ENCODE measurements at regions of chr3 and their contacts with region 1.

Region 1: DNA sequence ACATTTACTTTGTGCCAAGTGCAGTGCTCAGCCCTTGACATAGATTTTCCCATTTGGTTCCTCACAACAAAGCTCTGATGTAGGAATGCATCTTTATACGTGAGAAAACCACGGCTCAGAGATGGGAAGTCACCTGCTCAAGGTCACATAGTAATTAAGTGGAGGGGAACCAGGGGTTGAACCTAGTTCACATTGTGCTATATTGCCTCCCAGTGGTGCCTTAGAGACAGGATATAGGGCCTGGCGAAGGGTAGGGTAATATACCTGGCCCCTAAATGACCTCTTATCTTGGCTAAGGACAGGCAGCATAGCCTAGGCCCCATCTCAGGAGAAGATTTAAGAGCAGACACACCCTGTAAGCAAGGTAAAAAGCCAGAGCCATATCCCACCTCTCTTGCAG is 71.5 kb downstream of the FOXP1 start:
- DNase-seq: peak in 7 of 9 donors; percentile 60 to 76 (median 66)
- ATAC-seq: peak; percentile 96
- H3K4me3 ChIP-seq: no peak overlapping the region
- H3K4me3 Mint-ChIP-seq: peak overlapping the region in 7 of 10 donors; percentile 6 to 56 (median 44)
- H3K27ac ChIP-seq: peak overlapping the region; percentile 36
- H3K27ac Mint-ChIP-seq: peak overlapping the region in 5 of 9 donors; percentile 69 to 91 (median 83)
- H3K4me1 ChIP-seq: peaks cover 5 to 22% of the 10 kb centered on the region in 2 donors
- H3K4me1 Mint-ChIP-seq: peaks cover 11 to 54% (median 24%) of the 10 kb centered on the region in 7 donors
- H3K27me3 ChIP-seq: no peaks in the 10 kb centered on the region
- H3K27me3 Mint-ChIP-seq: no peaks in the 10 kb centered on the region

Region 2: GRCh38 chr3:70951316-70951715 is 560.7 kb before region 1 on chr3:
- CTCF ChIA-PET with region 1: no interaction called
- POLR2A ChIA-PET with region 1: no interaction called
- intact Hi-C with region 1: loop called in 1 of 2 experiments (anchors 10 kb)
- DNase-seq: no peak
- ATAC-seq: no peak
- H3K4me3 ChIP-seq: no peak overlapping the region
- H3K4me3 Mint-ChIP-seq: no peak overlapping the region
- H3K27ac ChIP-seq: no peak overlapping the region
- H3K27ac Mint-ChIP-seq: peak overlapping the region in 3 of 9 donors; percentile 1 to 76 (median 6)
- H3K4me1 ChIP-seq: no peaks in the 10 kb centered on the region
- H3K4me1 Mint-ChIP-seq: peaks cover 0 to 22% (median 6%) of the 10 kb centered on the region in 7 donors
- H3K27me3 ChIP-seq: no peaks in the 10 kb centered on the region
- H3K27me3 Mint-ChIP-seq: peaks cover 0 to 8% (median 0%) of the 10 kb centered on the region in 5 donors

Region 3: DNA sequence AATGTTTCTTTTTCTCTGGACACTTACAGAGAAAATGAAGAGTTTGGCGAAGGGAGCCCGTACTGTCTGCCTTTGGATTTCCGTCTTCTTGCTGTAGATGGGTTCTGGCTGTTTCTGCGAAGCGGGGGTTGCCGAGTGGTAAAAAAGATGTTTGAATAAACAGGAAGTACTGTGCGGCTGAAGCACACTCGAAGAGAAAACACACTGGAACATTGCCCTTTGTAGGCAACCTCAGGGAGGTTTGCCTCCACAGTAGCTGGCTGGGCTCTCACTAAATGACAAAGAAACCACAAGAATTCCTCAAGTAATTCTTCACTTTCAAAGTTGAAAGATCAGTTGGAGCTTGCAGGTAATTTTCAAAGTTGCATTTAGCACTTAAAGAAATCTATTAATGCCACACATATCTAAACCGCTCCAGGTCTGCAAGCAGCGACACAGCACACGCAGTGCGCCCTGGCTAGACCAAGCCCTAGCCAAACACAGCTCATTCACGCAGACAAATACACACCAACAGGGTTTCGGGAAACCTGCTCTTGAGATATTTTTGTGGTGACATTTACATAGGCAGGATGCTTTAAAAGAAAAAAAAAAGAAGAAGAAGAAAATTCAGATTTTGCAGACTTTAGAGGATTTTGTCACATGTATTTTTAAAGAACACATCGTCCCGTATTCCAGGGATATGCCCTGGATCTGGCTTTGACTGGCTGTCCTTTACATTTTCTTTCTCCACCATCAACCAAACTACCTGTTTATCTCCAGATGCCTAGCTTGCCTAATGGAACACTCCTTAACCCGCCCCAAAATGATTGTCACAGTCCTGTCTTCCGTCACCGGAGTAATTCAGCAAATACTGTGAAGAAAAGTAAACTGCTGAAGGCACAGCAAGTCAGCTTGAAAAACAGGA is 381.3 kb before region 1 on chr3:
- CTCF ChIA-PET with region 1: no interaction called
- POLR2A ChIA-PET with region 1: no interaction called
- intact Hi-C with region 1: loop called (anchors 5 kb)
- DNase-seq: peak; percentile 33 to 90 (median 85)
- ATAC-seq: peak; percentile 86
- H3K4me3 ChIP-seq: peak overlapping the region; percentile 71
- H3K4me3 Mint-ChIP-seq: peak overlapping the region; percentile 85 to 99 (median 93)
- H3K27ac ChIP-seq: peak overlapping the region; percentile 89
- H3K27ac Mint-ChIP-seq: peak overlapping the region; percentile 94 to 99 (median 97)
- H3K4me1 ChIP-seq: peaks cover 42 to 51% of the 10 kb centered on the region in 2 donors
- H3K4me1 Mint-ChIP-seq: peaks cover 49 to 85% (median 80%) of the 10 kb centered on the region in 7 donors
- H3K27me3 ChIP-seq: no peaks in the 10 kb centered on the region
- H3K27me3 Mint-ChIP-seq: no peaks in the 10 kb centered on the region

Region 4: GRCh38 chr3:71251156-71251775 is 260.7 kb before region 1 on chr3:
- CTCF ChIA-PET with region 1: interaction called, 3 read pairs
- POLR2A ChIA-PET with region 1: interaction called, 3 read pairs
- intact Hi-C with region 1: loop called in 1 of 2 experiments (anchors 5 kb)
- DNase-seq: no peak
- ATAC-seq: no peak
- H3K4me3 ChIP-seq: no peak overlapping the region
- H3K4me3 Mint-ChIP-seq: peak overlapping the region in 3 of 10 donors; percentile 9 to 33 (median 30)
- H3K27ac ChIP-seq: no peak overlapping the region
- H3K27ac Mint-ChIP-seq: peak overlapping the region in 8 of 9 donors; percentile 13 to 87 (median 66)
- H3K4me1 ChIP-seq: peaks cover 0 to 37% of the 10 kb centered on the region in 2 donors
- H3K4me1 Mint-ChIP-seq: peaks cover 2 to 95% (median 84%) of the 10 kb centered on the region in 7 donors
- H3K27me3 ChIP-seq: no peaks in the 10 kb centered on the region
- H3K27me3 Mint-ChIP-seq: no peaks in the 10 kb centered on the region

Region 5: GRCh38 chr3:71262364-71263265 is 249.4 kb before region 1 on chr3:
- CTCF ChIA-PET with region 1: no interaction called
- POLR2A ChIA-PET with region 1: no interaction called
- intact Hi-C with region 1: no loop called
- DNase-seq: no peak
- ATAC-seq: no peak
- H3K4me3 ChIP-seq: no peak overlapping the region
- H3K4me3 Mint-ChIP-seq: peak overlapping the region in 8 of 10 donors; percentile 4 to 57 (median 26)
- H3K27ac ChIP-seq: no peak overlapping the region
- H3K27ac Mint-ChIP-seq: peak overlapping the region in 8 of 9 donors; percentile 35 to 82 (median 76)
- H3K4me1 ChIP-seq: peaks cover 0 to 41% of the 10 kb centered on the region in 2 donors
- H3K4me1 Mint-ChIP-seq: peaks cover 29 to 90% (median 81%) of the 10 kb centered on the region in 7 donors
- H3K27me3 ChIP-seq: no peaks in the 10 kb centered on the region
- H3K27me3 Mint-ChIP-seq: no peaks in the 10 kb centered on the region

Region 6: GRCh38 chr3:71416876-71417275 is 95.1 kb before region 1 on chr3:
- CTCF ChIA-PET with region 1: interaction called, 3 read pairs
- POLR2A ChIA-PET with region 1: no interaction called
- intact Hi-C with region 1: loop called in 1 of 2 experiments (anchors 1 kb)
- DNase-seq: peak in 7 of 9 donors; percentile 56 to 72 (median 65)
- ATAC-seq: peak; percentile 69
- H3K4me3 ChIP-seq: peak overlapping the region; percentile 20
- H3K4me3 Mint-ChIP-seq: peak overlapping the region in 9 of 10 donors; percentile 40 to 82 (median 69)
- H3K27ac ChIP-seq: peak overlapping the region; percentile 67
- H3K27ac Mint-ChIP-seq: peak overlapping the region in 8 of 9 donors; percentile 87 to 99 (median 94)
- H3K4me1 ChIP-seq: peaks cover 54 to 87% of the 10 kb centered on the region in 2 donors
- H3K4me1 Mint-ChIP-seq: peaks cover 41 to 99% (median 96%) of the 10 kb centered on the region in 7 donors
- H3K27me3 ChIP-seq: no peaks in the 10 kb centered on the region
- H3K27me3 Mint-ChIP-seq: peaks cover 0 to 44% (median 0%) of the 10 kb centered on the region in 5 donors

Region 7: GRCh38 chr3:71495708-71496472 is 16.1 kb before region 1 on chr3:
- CTCF ChIA-PET with region 1: interaction called, 4 read pairs
- POLR2A ChIA-PET with region 1: interaction called, 53 read pairs
- intact Hi-C with region 1: no loop called
- DNase-seq: peak in 2 of 9 donors; percentile 24 to 34
- ATAC-seq: no peak
- H3K4me3 ChIP-seq: peak overlapping the region; percentile 33
- H3K4me3 Mint-ChIP-seq: peak overlapping the region; percentile 52 to 98 (median 80)
- H3K27ac ChIP-seq: peak overlapping the region; percentile 89
- H3K27ac Mint-ChIP-seq: peak overlapping the region; percentile 77 to 100 (median 98)
- H3K4me1 ChIP-seq: peaks cover 43 to 71% of the 10 kb centered on the region in 2 donors
- H3K4me1 Mint-ChIP-seq: peaks cover 54 to 90% (median 85%) of the 10 kb centered on the region in 7 donors
- H3K27me3 ChIP-seq: no peaks in the 10 kb centered on the region
- H3K27me3 Mint-ChIP-seq: no peaks in the 10 kb centered on the region

Measured in naive thymus-derived CD4-positive, alpha-beta T cell (primary cell).